ENCODE measurements at regions of chr9 and their contacts with region 1.

Region 1: DNA sequence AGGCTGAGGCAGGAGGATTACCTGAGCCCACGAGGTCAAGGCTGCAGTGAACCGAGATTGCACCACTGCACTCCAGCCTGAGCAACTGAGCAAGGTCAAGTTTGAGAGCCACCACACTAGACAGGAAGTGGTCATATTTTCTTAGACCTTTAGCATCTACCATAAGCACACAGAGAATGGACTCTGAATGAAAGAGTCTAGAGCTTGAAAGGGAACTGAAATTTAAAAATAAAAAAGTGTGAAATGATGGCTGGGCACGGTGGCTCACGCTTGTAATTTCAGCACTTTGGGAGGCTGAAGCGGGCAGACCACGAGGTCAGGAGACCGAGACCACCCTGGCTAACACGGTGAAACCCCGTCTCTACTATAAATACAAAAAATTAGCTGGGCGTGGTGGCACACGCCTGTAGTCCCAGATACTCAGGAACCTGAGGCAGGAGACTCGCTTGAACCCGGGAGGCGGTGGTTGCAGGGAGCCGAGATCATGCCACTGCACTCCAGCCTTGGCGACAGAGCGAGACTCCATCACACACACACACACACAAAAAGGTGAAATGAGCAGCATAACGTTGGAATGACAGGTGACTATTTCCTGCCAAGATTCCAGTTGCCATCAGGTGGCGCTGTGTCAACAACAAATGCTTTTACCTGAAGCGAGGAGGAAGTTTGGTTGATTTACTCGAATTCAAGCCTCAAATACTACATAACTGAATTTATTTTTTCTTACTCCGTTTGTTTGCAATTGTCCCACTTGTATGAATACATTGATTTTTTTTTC is 21.3 kb upstream of the AK3 start:
- DNase-seq: peak; percentile 48 to 83
- ATAC-seq: peak; percentile 73 to 83
- H3K4me3 ChIP-seq: no peak overlapping the region
- H3K27ac ChIP-seq: peak overlapping the region in 1 of 2 experiments; percentile 27; a peak in 3 of 6 replicates
- H3K4me1 ChIP-seq: 0 out of 3 replicates have a peak, but pooled peaks cover 6% of the 10 kb centered on the region
- CTCF ChIP-seq: peak; percentile 96
- EP300 ChIP-seq: no peak
- POLR2A ChIP-seq: no peak
- RAD21 ChIP-seq: peak; percentile 96 to 98

Region 2: GRCh38 chr9:4740638-4741364 is 21.5 kb before region 1 on chr9 and contains the start of gene AK3:
- CTCF ChIA-PET with region 1: interaction called, 69 read pairs
- POLR2A ChIA-PET with region 1: no interaction called
- DNase-seq: peak; percentile 87 to 89
- ATAC-seq: peak; percentile 92 to 95
- H3K4me3 ChIP-seq: peak within 1 kb of the TSS; percentile 88
- H3K27ac ChIP-seq: peak within 1 kb of the TSS; percentile 88 to 92
- H3K4me1 ChIP-seq: peaks cover 24% of the 10 kb centered on the region
- CTCF ChIP-seq: peak; percentile 29; the same call in 2 of the 3 replicates
- EP300 ChIP-seq: no peak
- POLR2A ChIP-seq: peak; percentile 89
- RAD21 ChIP-seq: peak; percentile 21 to 52; a peak in 3 of 5 replicates
- polyA plus RNA-seq, gene AK3: 70.4 and 83.0 TPM in 2 replicates

Region 3: GRCh38 chr9:4781408-4781807 is 19.1 kb after region 1 on chr9:
- CTCF ChIA-PET with region 1: interaction called, 14 read pairs
- POLR2A ChIA-PET with region 1: no interaction called
- DNase-seq: no peak
- ATAC-seq: no peak
- H3K4me3 ChIP-seq: no peak overlapping the region
- H3K27ac ChIP-seq: no peak overlapping the region
- H3K4me1 ChIP-seq: no peaks in the 10 kb centered on the region
- CTCF ChIP-seq: no peak
- EP300 ChIP-seq: no peak
- POLR2A ChIP-seq: no peak
- RAD21 ChIP-seq: no peak

Region 4: GRCh38 chr9:4850603-4851310 is 88.5 kb after region 1 on chr9:
- CTCF ChIA-PET with region 1: interaction called, 10 read pairs
- POLR2A ChIA-PET with region 1: no interaction called
- DNase-seq: no peak
- ATAC-seq: no peak
- H3K4me3 ChIP-seq: no peak overlapping the region
- H3K27ac ChIP-seq: no peak overlapping the region
- H3K4me1 ChIP-seq: no peaks in the 10 kb centered on the region
- CTCF ChIP-seq: no peak
- EP300 ChIP-seq: no peak
- POLR2A ChIP-seq: no peak
- RAD21 ChIP-seq: no peak

Region 5: DNA sequence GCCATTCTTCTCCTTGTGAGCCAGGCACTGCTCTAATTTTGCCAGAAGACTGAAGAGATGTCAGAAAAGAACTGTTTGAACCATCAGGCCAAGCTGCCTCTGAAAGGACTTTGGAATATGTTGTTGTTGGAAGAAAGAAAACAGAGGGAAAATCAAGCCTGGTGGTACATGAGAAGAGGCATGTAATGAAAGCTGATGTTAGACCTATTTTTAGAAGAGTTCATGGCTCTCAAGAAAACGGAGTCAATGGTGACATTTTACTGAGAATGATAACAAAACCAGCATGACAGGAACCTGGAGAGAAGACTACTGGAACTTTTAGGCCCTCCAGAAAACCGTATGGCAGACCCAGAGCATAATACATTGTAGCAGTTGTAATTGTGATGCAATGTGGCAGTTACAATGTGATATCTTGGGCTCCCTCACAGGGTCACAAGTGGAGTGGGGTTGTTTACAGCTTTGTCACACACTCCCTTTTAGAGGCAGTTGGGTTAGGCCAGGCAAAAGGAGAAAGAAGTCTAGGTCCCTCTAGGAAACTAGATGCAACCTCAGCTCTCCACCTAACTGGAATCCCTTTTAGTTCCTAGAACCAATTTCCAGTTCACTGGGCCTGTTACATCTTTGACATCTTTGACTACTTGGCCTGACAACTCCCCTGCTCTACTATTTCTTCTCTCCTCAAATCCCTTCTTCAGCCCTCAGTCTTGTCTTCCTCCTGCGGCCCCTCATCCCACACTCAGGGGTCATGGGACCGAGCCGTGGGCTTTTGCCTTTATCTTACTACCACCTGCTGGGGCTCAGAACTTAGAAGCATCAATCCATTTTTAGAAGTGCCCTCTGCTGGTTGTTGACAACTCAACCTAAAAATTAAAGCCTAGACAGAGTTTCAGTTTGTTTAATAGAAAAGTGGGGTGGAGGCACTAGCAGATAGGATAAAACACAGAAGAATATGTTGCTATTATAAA is 161.6 kb after region 1 on chr9:
- CTCF ChIA-PET with region 1: interaction called, 36 read pairs
- POLR2A ChIA-PET with region 1: no interaction called
- DNase-seq: peak; percentile 32 to 36
- ATAC-seq: peak; percentile 56 to 78; a peak in 3 of 6 replicates
- H3K4me3 ChIP-seq: no peak overlapping the region
- H3K27ac ChIP-seq: peak overlapping the region in 1 of 2 experiments; percentile 16; a peak in 1 of 6 replicates
- H3K4me1 ChIP-seq: no peaks in the 10 kb centered on the region
- CTCF ChIP-seq: peak; percentile 63
- EP300 ChIP-seq: no peak
- POLR2A ChIP-seq: no peak
- RAD21 ChIP-seq: peak; percentile 64 to 67

Region 6: GRCh38 chr9:5231212-5231611 is 468.9 kb after region 1 on chr9 and contains the start of gene INSL4:
- CTCF ChIA-PET with region 1: no interaction called
- POLR2A ChIA-PET with region 1: no interaction called
- DNase-seq: peak; percentile 58 to 93
- ATAC-seq: peak; percentile 97 to 98
- H3K4me3 ChIP-seq: peak within 1 kb of the TSS; percentile 37
- H3K27ac ChIP-seq: peak within 1 kb of the TSS; percentile 78 to 89
- H3K4me1 ChIP-seq: peaks cover 22% of the 10 kb centered on the region
- CTCF ChIP-seq: no peak
- EP300 ChIP-seq: peak in 1 of 2 experiments; percentile 48; a peak in 2 of 5 replicates
- POLR2A ChIP-seq: peak; percentile 76
- RAD21 ChIP-seq: 0 out of 5 replicates have a peak, but pooled peaks of 1 of the 2 experiments have one; percentile 8
- polyA plus RNA-seq, gene INSL4: 54.0 and 77.5 TPM in 2 replicates

Region 7: DNA sequence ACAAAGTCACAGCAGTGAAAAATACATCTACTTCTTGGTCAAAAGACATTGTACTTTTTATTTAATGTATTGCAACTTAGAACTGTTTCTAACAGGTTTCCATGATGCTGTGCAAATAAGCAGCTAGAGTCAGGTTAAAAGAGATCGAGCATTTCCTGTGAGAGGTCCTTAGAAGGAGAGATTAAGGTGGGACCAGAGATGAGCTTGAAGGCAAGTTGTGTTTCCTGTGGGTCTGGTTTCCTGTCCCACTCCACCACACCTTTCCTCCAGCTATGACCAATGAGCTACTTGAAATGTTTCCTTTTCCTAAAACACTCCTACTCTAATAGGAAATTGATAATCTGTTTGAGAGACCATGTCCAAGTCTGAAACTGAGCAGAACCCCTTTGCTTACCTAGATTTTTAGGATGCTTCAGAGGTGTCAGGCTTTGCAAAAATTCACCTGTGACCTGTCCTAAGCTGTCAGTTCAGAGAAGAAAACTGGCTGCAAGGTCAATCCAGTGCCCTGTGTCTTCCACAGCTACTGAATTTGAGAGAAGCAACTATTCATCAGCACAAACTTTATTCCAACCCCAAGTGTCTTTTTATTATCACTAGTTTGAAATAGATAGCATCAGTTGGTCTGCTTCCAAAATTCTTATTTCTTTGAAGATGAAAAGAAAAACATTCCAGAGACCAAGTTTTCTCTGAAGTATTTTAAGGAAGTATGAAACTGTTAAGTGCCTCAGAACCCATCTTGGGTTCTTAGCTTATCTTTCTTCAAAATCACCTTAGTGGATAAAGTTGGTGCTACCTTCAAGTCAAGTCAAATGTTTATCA is 590.5 kb after region 1 on chr9:
- CTCF ChIA-PET with region 1: no interaction called
- POLR2A ChIA-PET with region 1: no interaction called
- DNase-seq: no peak
- ATAC-seq: no peak
- H3K4me3 ChIP-seq: no peak overlapping the region
- H3K27ac ChIP-seq: no peak overlapping the region
- H3K4me1 ChIP-seq: no peaks in the 10 kb centered on the region
- CTCF ChIP-seq: no peak
- EP300 ChIP-seq: no peak
- POLR2A ChIP-seq: no peak
- RAD21 ChIP-seq: no peak

Region 8: GRCh38 chr9:5392285-5392684 is 630.0 kb after region 1 on chr9:
- CTCF ChIA-PET with region 1: no interaction called
- POLR2A ChIA-PET with region 1: no interaction called
- DNase-seq: no peak
- ATAC-seq: no peak
- H3K4me3 ChIP-seq: no peak overlapping the region
- H3K27ac ChIP-seq: no peak overlapping the region
- H3K4me1 ChIP-seq: no peaks in the 10 kb centered on the region
- CTCF ChIP-seq: no peak
- EP300 ChIP-seq: no peak
- POLR2A ChIP-seq: no peak
- RAD21 ChIP-seq: no peak

Measured in A549 (cell line).